ENCODE measurements at regions of chr7 and their contacts with region 1.

Region 1: GRCh38 chr7:121107923-121108498 is 119.5 kb downstream of the CPED1 start:
- DNase-seq: no peak
- ATAC-seq: peak; percentile 79

Region 2: GRCh38 chr7:120805636-120806388 is 302.2 kb before region 1 on chr7:
- intact Hi-C with region 1: loop called (anchors 10 kb)
- DNase-seq: no peak
- ATAC-seq: no peak

Region 3: GRCh38 chr7:120996333-120996987 is 111.6 kb before region 1 on chr7:
- intact Hi-C with region 1: no loop called
- DNase-seq: no peak
- ATAC-seq: peak; percentile 64

Region 4: DNA sequence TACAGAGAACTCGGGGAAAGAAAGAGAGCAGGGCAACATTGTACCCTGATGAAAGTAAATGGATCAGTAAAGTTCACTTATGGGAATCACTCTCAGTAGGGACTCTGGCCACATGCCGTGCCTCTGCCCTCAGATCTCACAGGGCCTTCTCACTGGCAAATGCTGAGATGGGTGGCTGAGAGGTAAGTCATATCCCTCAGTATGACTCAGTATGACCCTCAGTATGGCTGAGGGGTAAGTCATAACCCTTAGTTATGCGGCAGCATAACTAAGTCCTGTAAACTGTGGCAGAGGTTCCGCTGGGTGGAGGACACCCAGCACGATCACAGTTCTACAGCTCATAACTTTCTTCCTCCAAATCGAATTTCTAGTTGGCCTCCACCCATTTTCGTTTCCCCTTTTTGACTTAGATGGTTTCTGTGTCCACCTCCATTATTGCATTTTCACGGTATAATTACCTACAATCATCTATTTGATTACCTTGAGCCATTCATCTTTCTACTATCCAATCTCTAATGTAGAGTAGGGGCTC is 194.3 kb after region 1 on chr7:
- intact Hi-C with region 1: no loop called
- DNase-seq: no peak
- ATAC-seq: no peak

Measured in Right ventricle myocardium inferior (tissue), 1 donor.